A673 (cell line): ENCODE measurements at regions of chr4 and their contacts with region 1.

Region 1: DNA sequence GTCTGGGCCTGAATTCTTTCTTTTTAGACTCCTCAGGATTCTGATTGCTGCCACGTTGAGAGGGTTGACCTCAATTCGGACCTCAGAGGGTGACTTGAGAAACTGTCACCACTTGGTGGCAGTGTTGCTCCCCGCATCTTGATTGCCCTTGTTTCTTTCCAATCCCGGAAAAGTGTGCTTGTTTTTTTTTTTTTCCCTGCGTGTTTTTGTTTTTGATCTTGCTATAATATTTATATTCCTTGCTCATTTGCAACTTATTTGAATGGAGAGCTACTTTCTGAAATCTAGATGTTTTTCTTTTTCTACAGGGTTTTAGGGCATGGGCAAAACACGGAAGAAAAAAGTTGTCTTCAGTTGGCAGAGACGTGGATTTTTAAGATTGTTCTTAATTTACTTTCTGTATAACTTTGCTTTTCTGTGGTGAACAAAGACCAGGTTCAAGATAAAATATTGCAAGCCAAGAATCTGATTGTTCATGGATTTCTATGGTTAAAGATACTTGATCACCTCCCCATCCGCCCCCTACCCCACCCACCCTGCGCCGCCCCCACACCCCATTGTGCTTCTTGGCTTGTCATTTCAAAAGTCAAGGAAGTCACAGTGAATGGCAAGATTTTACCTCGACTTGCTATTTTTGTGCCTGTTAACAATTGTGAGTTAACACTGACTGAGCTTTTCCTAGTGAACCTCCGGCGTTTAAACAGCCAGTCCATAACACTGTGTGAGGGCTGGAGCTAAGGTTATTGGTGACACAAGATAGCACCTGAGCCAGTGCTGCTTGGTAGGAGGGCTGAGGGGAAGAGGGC is 102.1 kb downstream of the PTTG2 start:
- DNase-seq: peak; percentile 76
- H3K4me3 ChIP-seq: peak overlapping the region; percentile 24
- H3K27ac ChIP-seq: no peak overlapping the region
- H3K4me1 ChIP-seq: peaks cover 3% of the 10 kb centered on the region
- H3K27me3 ChIP-seq: no peaks in the 10 kb centered on the region
- CTCF ChIP-seq: peak; percentile 85

Region 2: DNA sequence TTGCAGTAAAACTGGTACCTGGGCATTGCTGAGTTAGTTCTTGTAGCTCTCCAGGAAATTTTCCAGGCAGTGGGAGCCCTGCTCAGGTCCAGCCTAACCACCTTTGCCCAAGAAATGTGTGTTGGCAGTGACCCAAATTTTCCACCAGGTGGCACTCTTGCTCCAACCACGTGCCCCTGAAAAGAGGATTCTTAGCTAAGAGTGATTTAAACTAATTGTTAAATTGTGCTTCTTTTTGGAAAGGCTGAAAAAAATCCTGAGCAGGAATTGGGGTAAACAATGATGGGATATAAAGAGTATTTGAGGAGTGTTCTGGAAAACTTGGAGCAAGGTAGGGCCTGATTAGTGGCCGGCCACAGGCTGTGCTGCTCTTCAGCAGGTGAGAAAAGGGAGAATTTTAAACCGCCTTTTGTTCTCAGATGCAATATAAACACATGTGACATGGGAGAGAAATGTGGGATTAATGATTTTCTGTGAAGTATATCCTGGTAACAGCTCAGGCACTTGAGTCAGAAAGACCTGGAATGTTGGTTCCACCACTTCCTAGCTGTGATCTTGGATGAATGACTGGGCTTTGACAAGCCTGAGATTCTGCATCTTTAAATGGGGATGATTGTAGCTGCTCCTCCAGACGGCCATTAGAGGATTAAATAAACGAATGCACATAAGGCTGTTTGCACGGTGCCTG is 117.5 kb after region 1 on chr4:
- CTCF ChIA-PET with region 1: interaction called, 4 read pairs
- POLR2A ChIA-PET with region 1: no interaction called
- intact Hi-C with region 1: loop called (anchors 5 kb)
- DNase-seq: peak; percentile 77
- H3K4me3 ChIP-seq: no peak overlapping the region
- H3K27ac ChIP-seq: no peak overlapping the region
- H3K4me1 ChIP-seq: no peaks in the 10 kb centered on the region
- H3K27me3 ChIP-seq: no peaks in the 10 kb centered on the region
- CTCF ChIP-seq: peak; percentile 90

Region 3: GRCh38 chr4:38675146-38676121 is 613.1 kb after region 1 on chr4:
- CTCF ChIA-PET with region 1: no interaction called
- POLR2A ChIA-PET with region 1: no interaction called
- intact Hi-C with region 1: loop called (anchors 5 kb)
- DNase-seq: peak; percentile 89
- H3K4me3 ChIP-seq: no peak overlapping the region
- H3K27ac ChIP-seq: peak overlapping the region; percentile 98
- H3K4me1 ChIP-seq: peaks cover 75% of the 10 kb centered on the region
- H3K27me3 ChIP-seq: no peaks in the 10 kb centered on the region
- CTCF ChIP-seq: peak; percentile 96

Region 4: DNA sequence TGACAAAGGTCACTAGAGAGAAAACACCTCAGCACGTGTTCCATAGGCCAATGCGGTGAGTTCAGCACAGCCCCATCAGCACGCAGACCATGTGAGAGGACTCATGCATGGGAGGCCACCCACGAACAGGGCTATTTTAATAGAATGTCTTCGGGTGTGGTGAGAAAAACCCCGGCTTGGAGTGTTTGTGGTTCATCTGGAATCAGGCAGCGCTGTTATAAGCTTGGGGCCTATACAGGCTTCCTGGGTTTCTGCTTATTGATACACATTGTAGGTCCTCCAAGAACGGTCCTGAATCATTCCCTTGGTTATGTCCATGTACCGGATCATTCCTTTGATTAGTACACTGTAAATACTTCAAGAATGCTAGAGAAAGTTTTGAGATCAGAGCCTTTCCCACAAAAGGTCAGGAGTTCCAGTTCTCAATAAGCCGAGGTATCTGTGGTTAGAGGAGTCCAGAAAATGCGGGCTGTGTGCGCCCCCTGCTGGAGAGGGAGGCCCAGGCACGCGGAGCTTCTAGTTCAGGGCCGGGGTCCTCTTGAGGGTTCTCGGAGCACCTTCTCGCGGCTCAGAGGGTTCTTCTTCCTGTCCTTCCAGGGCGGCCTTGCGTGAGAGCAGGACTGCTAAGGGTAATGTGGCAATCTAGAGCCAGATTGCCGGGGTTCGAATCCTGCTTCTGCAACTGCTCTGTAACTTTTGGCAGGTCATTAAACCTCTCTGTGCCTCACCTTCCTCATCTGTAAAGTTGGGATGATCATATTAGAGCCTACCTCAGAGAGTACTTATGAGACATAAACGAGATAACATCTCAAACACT is 668.7 kb after region 1 on chr4:
- CTCF ChIA-PET with region 1: no interaction called
- POLR2A ChIA-PET with region 1: no interaction called
- intact Hi-C with region 1: loop called (anchors 2 kb)
- DNase-seq: peak; percentile 84
- H3K4me3 ChIP-seq: no peak overlapping the region
- H3K27ac ChIP-seq: no peak overlapping the region
- H3K4me1 ChIP-seq: no peaks in the 10 kb centered on the region
- H3K27me3 ChIP-seq: no peaks in the 10 kb centered on the region
- CTCF ChIP-seq: peak; percentile 98

Region 5: GRCh38 chr4:38782452-38783108 is 720.3 kb after region 1 on chr4 and contains the start of gene TLR10:
- CTCF ChIA-PET with region 1: interaction called, 4 read pairs
- POLR2A ChIA-PET with region 1: no interaction called
- intact Hi-C with region 1: loop called (anchors 5 kb)
- DNase-seq: peak; percentile 46
- H3K4me3 ChIP-seq: no peak within 1 kb of the TSS
- H3K27ac ChIP-seq: no peak within 1 kb of the TSS
- H3K4me1 ChIP-seq: no peaks in the 10 kb centered on the region
- H3K27me3 ChIP-seq: no peaks in the 10 kb centered on the region
- CTCF ChIP-seq: peak; percentile 65
- total RNA-seq, gene TLR10: not detected in 2 replicates

Region 6: GRCh38 chr4:38856524-38857337 is 794.4 kb after region 1 on chr4 and contains the start of gene TLR6:
- CTCF ChIA-PET with region 1: no interaction called
- POLR2A ChIA-PET with region 1: no interaction called
- intact Hi-C with region 1: loop called (anchors 5 kb)
- DNase-seq: peak; percentile 65
- H3K4me3 ChIP-seq: peak within 1 kb of the TSS; percentile 14
- H3K27ac ChIP-seq: peak within 1 kb of the TSS; percentile 11
- H3K4me1 ChIP-seq: peaks cover 7% of the 10 kb centered on the region
- H3K27me3 ChIP-seq: no peaks in the 10 kb centered on the region
- CTCF ChIP-seq: peak; percentile 84
- total RNA-seq, gene TLR6: 0.59 and 1.5 TPM in 2 replicates